Calu3 (cell line): ENCODE measurements at regions of chr4 and their contacts with region 1.

Region 1: GRCh38 chr4:2186133-2186864 is 55.6 kb downstream of the HAUS3 start:
- DNase-seq: peak; percentile 50
- H3K4me3 Mint-ChIP-seq: no peak overlapping the region
- H3K27ac Mint-ChIP-seq: no peak overlapping the region
- H3K4me1 Mint-ChIP-seq: no peaks in the 10 kb centered on the region
- H3K27me3 Mint-ChIP-seq: no peaks in the 10 kb centered on the region
- CTCF ChIP-seq: peak; percentile 43

Region 2: DNA sequence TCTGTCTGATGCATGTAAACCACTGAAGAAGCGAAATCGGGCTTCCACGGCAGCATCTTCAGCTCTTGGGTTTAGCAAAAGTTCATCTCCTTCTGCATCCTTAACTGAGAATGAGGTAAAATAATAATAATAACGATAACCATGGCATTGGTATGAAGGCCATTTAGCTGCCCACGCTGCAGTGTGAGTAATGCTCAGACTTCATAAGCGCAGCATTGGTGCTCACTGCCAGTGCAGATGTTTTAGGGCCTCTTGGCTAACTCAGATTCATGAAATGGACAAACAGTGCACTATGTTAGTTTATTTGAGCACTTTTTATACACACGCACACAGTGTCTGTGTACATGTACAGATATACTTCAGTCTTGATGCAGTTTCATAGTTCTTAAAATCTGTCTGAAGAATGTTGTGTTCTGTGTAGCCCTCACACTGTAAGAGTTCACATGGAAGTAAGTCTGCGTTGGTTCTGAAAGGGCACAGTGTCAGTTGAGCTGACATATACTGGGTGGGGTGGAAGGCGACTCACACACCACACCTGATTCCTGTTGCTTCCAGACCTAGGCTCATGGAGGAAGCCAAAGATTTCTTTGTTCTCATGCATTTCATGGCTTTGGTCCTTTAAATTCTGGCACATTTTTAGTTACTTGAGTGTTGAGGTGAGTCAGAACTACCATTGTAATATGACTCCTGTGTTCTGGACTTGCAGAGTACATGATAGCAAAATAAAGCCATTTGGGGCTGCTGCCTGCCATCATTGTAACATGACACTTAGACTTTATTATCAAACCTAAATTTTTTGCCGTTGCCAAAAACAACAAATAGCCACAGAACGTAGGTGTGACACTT is 246.4 kb before region 1 on chr4:
- CTCF ChIA-PET with region 1: no interaction called
- intact Hi-C with region 1: loop called (anchors 10 kb)
- DNase-seq: peak; percentile 30
- H3K4me3 Mint-ChIP-seq: no peak overlapping the region
- H3K27ac Mint-ChIP-seq: peak overlapping the region; percentile 23
- H3K4me1 Mint-ChIP-seq: no peaks in the 10 kb centered on the region
- H3K27me3 Mint-ChIP-seq: no peaks in the 10 kb centered on the region
- CTCF ChIP-seq: no peak

Region 3: GRCh38 chr4:2009704-2010197 is 176.5 kb before region 1 on chr4:
- CTCF ChIA-PET with region 1: no interaction called
- intact Hi-C with region 1: loop called (anchors 10 kb)
- DNase-seq: peak; percentile 72
- H3K4me3 Mint-ChIP-seq: peak overlapping the region; percentile 74
- H3K27ac Mint-ChIP-seq: peak overlapping the region; percentile 79
- H3K4me1 Mint-ChIP-seq: peaks cover 7% of the 10 kb centered on the region
- H3K27me3 Mint-ChIP-seq: no peaks in the 10 kb centered on the region
- CTCF ChIP-seq: no peak

Region 4: GRCh38 chr4:2269206-2269531 is 82.9 kb after region 1 on chr4:
- CTCF ChIA-PET with region 1: no interaction called
- intact Hi-C with region 1: no loop called
- DNase-seq: no peak
- H3K4me3 Mint-ChIP-seq: no peak overlapping the region
- H3K27ac Mint-ChIP-seq: no peak overlapping the region
- H3K4me1 Mint-ChIP-seq: no peaks in the 10 kb centered on the region
- H3K27me3 Mint-ChIP-seq: peaks cover 18% of the 10 kb centered on the region
- CTCF ChIP-seq: no peak

Region 5: DNA sequence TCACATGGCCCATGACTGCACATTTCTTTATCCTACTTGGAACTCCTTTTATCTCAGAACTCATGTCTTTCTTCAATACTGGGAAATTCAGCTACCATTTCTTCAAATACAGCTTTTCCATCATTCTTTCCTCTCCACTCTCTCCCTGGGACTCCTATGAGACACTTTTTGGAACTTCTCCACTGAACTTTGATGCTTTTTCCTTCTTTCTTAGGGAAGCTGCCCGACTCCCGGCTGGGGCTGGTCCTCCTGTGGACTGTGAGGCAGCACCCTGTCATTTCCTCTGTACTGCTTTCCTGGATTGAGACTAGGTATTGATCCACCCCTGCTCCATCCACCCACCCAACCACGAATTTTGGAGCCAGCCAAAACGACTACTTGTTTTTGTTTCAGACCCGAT is 192.1 kb after region 1 on chr4:
- CTCF ChIA-PET with region 1: no interaction called
- intact Hi-C with region 1: no loop called
- DNase-seq: no peak
- H3K4me3 Mint-ChIP-seq: no peak overlapping the region
- H3K27ac Mint-ChIP-seq: no peak overlapping the region
- H3K4me1 Mint-ChIP-seq: no peaks in the 10 kb centered on the region
- H3K27me3 Mint-ChIP-seq: peaks cover 60% of the 10 kb centered on the region
- CTCF ChIP-seq: no peak

Region 6: GRCh38 chr4:2432991-2433698 is 246.8 kb after region 1 on chr4:
- CTCF ChIA-PET with region 1: no interaction called
- intact Hi-C with region 1: no loop called
- DNase-seq: no peak
- H3K4me3 Mint-ChIP-seq: no peak overlapping the region
- H3K27ac Mint-ChIP-seq: no peak overlapping the region
- H3K4me1 Mint-ChIP-seq: no peaks in the 10 kb centered on the region
- H3K27me3 Mint-ChIP-seq: peaks cover 28% of the 10 kb centered on the region
- CTCF ChIP-seq: no peak

Region 7: GRCh38 chr4:2867758-2868491 is 681.6 kb after region 1 on chr4:
- CTCF ChIA-PET with region 1: no interaction called
- intact Hi-C with region 1: no loop called
- DNase-seq: no peak
- H3K4me3 Mint-ChIP-seq: no peak overlapping the region
- H3K27ac Mint-ChIP-seq: no peak overlapping the region
- H3K4me1 Mint-ChIP-seq: peaks cover 29% of the 10 kb centered on the region
- H3K27me3 Mint-ChIP-seq: no peaks in the 10 kb centered on the region
- CTCF ChIP-seq: no peak